ENCODE measurements at regions of chr9 and their contacts with region 1.

Region 1: GRCh38 chr9:89000973-89001916 is 10.0 kb downstream of the S1PR3 start:
- DNase-seq: peak; percentile 87 to 91
- ATAC-seq: peak; percentile 55 to 86 (median 80)
- H3K4me3 ChIP-seq: peak overlapping the region in 2 of 10 donors; percentile 4 to 19
- H3K27ac ChIP-seq: peak overlapping the region in 7 of 10 donors; percentile 15 to 75 (median 43)
- H3K4me1 ChIP-seq: peaks cover 12 to 46% (median 38%) of the 10 kb centered on the region in 9 donors
- H3K27me3 ChIP-seq: peaks cover 0 to 8% (median 0%) of the 10 kb centered on the region in 7 donors
- CTCF ChIP-seq: peak; percentile 58 to 89 (median 79)

Region 2: DNA sequence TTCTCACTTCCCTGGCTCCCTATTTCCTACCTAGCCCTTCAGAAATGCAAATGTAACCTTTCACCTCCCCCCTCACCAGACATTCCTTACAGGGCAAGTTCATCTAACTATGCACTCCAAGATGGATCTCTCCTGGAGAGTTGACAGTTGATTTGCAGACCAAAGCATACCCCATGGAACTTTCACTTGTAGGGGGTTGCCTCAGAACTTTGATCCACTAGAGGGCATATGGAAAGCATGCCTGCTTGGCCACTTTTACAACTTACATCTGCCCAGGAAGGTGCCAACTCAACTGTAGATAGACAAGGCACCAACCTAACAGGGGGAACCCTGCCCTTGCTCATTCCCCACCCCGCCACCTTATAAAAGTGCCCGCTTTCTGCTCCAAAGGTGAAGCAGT is 278.5 kb before region 1 on chr9:
- intact Hi-C with region 1: loop called in 7 of 10 experiments (anchors 2 to 10 kb)
- DNase-seq: no peak
- ATAC-seq: peak in 6 of 8 donors; percentile 37 to 75 (median 63)
- H3K4me3 ChIP-seq: no peak overlapping the region
- H3K27ac ChIP-seq: no peak overlapping the region
- H3K4me1 ChIP-seq: peaks cover 0 to 10% (median 6%) of the 10 kb centered on the region in 9 donors
- H3K27me3 ChIP-seq: peaks cover 0 to 7% (median 0%) of the 10 kb centered on the region in 7 donors
- CTCF ChIP-seq: peak in 8 of 9 donors; percentile 14 to 54 (median 46)

Region 3: GRCh38 chr9:88733651-88734421 is 267.4 kb before region 1 on chr9:
- intact Hi-C with region 1: loop called in 5 of 10 experiments (anchors 10 kb)
- DNase-seq: peak; percentile 32 to 79
- ATAC-seq: peak in 5 of 8 donors; percentile 48 to 77 (median 51)
- H3K4me3 ChIP-seq: no peak overlapping the region
- H3K27ac ChIP-seq: peak overlapping the region in 6 of 10 donors; percentile 22 to 77 (median 56)
- H3K4me1 ChIP-seq: peaks cover 0 to 21% (median 7%) of the 10 kb centered on the region in 9 donors
- H3K27me3 ChIP-seq: no peaks in the 10 kb centered on the region
- CTCF ChIP-seq: no peak

Region 4: DNA sequence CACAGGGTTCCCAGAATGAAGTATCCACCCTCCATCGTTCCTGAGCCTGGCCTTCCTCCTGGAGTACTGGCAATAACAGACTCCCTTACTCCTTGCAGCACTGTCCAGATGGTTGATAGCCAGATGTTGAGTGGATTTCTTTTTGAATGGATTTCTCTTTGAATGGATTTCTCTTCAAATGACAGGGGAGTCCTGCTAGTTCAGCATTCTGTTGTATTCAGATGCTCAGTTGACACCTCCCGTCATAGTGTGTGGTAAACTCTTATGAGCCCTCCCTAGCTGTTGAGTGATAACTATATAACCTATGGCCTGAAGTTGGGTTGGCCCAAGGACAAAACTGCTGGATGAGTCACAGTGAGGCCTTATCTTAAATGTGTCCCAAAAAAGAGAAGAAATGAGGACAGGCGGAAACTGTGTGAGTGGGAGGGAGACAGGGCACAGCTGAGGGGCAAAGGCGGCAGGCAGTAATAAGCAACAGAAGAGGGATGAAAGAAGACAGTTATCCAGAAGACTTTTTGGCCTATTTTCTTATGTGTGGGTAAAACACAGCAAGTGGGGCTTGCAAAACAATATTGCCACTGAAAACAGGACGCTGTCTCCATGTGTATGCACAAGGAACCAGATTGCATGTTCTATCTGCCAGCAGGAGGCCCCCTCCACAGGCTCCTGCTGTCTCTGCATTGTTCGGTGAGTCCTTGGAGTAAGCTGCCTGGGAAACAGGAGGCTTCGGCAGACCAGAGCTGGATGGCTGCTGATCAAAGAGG is 219.4 kb before region 1 on chr9:
- intact Hi-C with region 1: loop called in 6 of 10 experiments (anchors 5 to 10 kb)
- DNase-seq: peak; percentile 33 to 48
- ATAC-seq: peak; percentile 40 to 82 (median 72)
- H3K4me3 ChIP-seq: no peak overlapping the region
- H3K27ac ChIP-seq: peak overlapping the region; percentile 15 to 71 (median 54)
- H3K4me1 ChIP-seq: peaks cover 9 to 50% (median 43%) of the 10 kb centered on the region in 9 donors
- H3K27me3 ChIP-seq: no peaks in the 10 kb centered on the region
- CTCF ChIP-seq: peak; percentile 14 to 70 (median 50)

Region 5: GRCh38 chr9:88789785-88790184 is 211.5 kb before region 1 on chr9:
- intact Hi-C with region 1: loop called in 6 of 10 experiments (anchors 5 to 10 kb)
- DNase-seq: no peak
- ATAC-seq: no peak
- H3K4me3 ChIP-seq: no peak overlapping the region
- H3K27ac ChIP-seq: no peak overlapping the region
- H3K4me1 ChIP-seq: peaks cover 0 to 28% (median 27%) of the 10 kb centered on the region in 9 donors
- H3K27me3 ChIP-seq: no peaks in the 10 kb centered on the region
- CTCF ChIP-seq: no peak

Region 6: GRCh38 chr9:88874383-88874782 is 126.9 kb before region 1 on chr9:
- intact Hi-C with region 1: loop called in 4 of 10 experiments (anchors 2 to 10 kb)
- DNase-seq: no peak
- ATAC-seq: peak in 7 of 8 donors; percentile 20 to 61 (median 46)
- H3K4me3 ChIP-seq: no peak overlapping the region
- H3K27ac ChIP-seq: peak overlapping the region in 5 of 10 donors; percentile 40 to 73 (median 57)
- H3K4me1 ChIP-seq: peaks cover 5 to 35% (median 18%) of the 10 kb centered on the region in 9 donors
- H3K27me3 ChIP-seq: no peaks in the 10 kb centered on the region
- CTCF ChIP-seq: peak in 7 of 9 donors; percentile 18 to 48 (median 40)

Region 7: GRCh38 chr9:88949425-88949824 is 51.8 kb before region 1 on chr9:
- intact Hi-C with region 1: loop called in 1 of 10 experiments (anchors 2 kb)
- DNase-seq: peak; percentile 44 to 73
- ATAC-seq: peak; percentile 80 to 96 (median 90)
- H3K4me3 ChIP-seq: no peak overlapping the region
- H3K27ac ChIP-seq: peak overlapping the region in 9 of 10 donors; percentile 42 to 80 (median 61)
- H3K4me1 ChIP-seq: peaks cover 5 to 52% (median 32%) of the 10 kb centered on the region in 9 donors
- H3K27me3 ChIP-seq: no peaks in the 10 kb centered on the region
- CTCF ChIP-seq: no peak

Region 8: GRCh38 chr9:89874351-89875321 is 873.4 kb after region 1 on chr9:
- intact Hi-C with region 1: no loop called
- DNase-seq: peak; percentile 44 to 57
- ATAC-seq: peak; percentile 7 to 29 (median 23)
- H3K4me3 ChIP-seq: no peak overlapping the region
- H3K27ac ChIP-seq: peak overlapping the region; percentile 41 to 99 (median 88)
- H3K4me1 ChIP-seq: peaks cover 16 to 74% (median 58%) of the 10 kb centered on the region in 9 donors
- H3K27me3 ChIP-seq: no peaks in the 10 kb centered on the region
- CTCF ChIP-seq: no peak

Region 9: GRCh38 chr9:90219548-90220118 is 1218.4 kb after region 1 on chr9:
- intact Hi-C with region 1: no loop called
- DNase-seq: peak in 1 of 2 donors; percentile 20
- ATAC-seq: no peak
- H3K4me3 ChIP-seq: no peak overlapping the region
- H3K27ac ChIP-seq: no peak overlapping the region
- H3K4me1 ChIP-seq: no peaks in the 10 kb centered on the region
- H3K27me3 ChIP-seq: peaks cover 0 to 24% (median 14%) of the 10 kb centered on the region in 7 donors
- CTCF ChIP-seq: peak in 8 of 9 donors; percentile 18 to 56 (median 41)